ENCODE measurements at regions of chr19 and their contacts with region 1.

Region 1: DNA sequence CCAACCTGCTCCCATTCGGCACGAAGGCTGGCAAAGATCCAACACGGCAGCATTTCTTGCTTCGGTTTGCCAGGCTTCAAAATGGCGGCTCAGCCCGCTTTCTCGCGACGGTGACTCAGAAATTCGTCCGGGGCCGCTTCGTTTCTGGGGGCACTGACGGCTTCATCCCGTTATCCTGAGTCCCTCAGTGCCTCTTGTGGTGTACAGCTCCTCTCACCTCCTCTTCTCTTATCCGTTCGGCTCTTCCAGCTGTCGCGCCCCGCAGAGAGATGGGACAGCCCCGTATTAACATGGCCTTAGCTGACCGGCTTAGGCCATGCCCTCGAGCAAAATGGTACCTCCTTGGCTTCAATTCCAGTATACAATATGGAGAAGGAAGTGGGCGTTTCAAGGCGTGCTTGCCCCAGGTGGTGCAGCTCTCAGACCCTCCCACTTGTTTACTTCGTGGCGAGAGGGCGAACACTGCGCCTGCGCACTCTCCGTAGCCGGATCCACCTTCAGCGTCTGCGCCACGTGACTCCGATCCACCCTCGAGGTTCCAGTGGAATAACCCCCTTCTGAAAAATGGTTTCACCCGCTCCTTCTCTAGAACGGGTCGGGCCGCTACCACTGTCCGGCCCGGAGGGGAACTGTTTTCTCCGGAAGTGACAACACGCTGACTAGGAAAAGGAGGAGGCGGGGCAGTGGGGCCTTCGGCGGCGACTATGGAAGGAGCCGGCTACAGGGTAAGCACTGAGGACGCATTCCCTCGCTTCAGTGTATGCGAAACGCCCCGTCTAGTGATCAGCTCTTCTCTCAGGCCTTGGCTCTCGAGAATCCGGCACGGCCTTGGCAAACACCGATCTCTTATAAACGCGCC is at the starts of genes AKT1S1 and TBC1D17:
- DNase-seq: peak; percentile 100
- total RNA-seq, gene AKT1S1: 35.8 TPM
- total RNA-seq, gene TBC1D17: 48.0 TPM

Region 2: DNA sequence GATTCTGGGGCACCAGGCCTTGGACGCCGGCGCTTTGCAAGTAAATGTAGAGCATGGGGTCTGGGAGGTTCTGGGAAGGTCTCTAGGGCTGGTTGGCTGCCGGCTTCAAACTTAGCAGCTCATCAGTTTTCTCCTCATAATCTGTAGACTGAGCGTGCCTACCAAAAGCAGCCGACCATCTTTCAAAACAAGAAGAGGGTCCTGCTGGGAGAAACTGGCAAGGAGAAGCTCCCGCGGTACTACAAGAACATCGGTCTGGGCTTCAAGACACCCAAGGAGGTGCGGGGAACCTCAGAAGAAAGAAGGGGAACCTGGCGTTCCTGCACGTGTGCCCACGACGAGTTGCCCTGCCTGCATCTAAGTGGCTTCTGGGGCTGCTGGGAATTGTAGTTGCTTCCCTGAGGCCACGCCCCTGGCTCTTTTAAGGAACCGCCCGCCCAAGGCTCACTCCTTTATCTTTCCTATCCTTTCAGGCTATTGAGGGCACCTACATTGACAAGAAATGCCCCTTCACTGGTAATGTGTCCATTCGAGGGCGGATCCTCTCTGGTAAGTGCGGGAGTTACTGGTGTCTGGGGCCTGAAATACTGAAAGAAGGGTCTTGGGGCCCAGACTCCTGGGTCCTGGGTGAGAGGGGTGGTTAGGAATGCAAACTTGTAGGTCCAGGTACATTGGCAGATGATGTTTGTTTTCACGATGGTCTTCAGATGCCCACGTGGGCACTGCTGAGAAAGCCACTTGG is 380.0 kb before region 1 on chr19:
- intact Hi-C with region 1: loop called (anchors 10 kb)
- DNase-seq: peak; percentile 84

Region 3: GRCh38 chr19:49766007-49766937 is 111.0 kb before region 1 on chr19:
- intact Hi-C with region 1: loop called (anchors 5 kb)
- DNase-seq: peak; percentile 100

Region 4: GRCh38 chr19:49817964-49818648 is 59.1 kb before region 1 on chr19 and contains the start of gene MED25:
- intact Hi-C with region 1: no loop called
- DNase-seq: peak; percentile 94
- total RNA-seq, gene MED25: 33.0 TPM

Region 5: DNA sequence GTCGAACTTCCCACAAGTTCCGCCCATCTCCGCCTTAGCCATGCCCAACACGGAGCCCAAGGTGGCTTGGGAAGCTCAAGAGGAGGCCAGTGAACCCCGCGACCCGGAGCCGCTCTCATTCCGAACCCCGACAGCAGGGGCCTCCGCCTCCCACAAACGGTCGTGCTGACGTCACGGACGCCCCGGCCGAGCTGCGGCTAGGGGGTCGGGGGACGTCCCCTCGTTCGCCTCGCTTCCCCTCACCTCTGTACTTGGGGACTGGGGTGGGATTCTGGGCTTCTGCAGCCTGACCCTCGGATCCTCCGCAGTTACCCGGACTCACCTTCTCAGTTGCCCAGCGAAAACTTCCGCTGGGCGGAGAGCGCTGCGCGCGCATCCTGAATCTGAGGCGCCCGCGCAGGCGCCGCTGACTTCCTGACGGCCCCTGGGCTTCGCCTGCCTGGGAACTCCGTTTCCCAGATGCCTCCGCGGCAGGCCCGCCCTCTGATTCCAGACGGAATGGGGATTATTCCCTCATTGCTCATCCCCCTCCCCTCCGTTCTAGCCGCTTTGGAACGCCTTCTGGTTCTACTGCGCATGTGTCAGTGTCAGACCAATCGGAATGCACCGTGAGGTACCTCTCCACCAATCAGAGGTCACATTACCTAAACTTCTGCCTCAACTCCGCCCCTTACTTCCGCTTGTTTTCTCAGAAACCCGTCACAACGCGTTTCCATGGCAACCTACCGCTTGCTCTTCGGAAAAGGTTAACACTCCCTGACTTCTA is 148.0 kb after region 1 on chr19 and contains the start of gene VRK3:
- intact Hi-C with region 1: loop called (anchors 5 kb)
- DNase-seq: peak; percentile 99
- total RNA-seq, gene VRK3: 22.1 TPM

Measured in cardiac septum (tissue), 1 donor.